ENCODE measurements at regions of chr1 and their contacts with region 1.

Region 1: GRCh38 chr1:201970334-201971159 is 11.9 kb upstream of the RNPEP start:
- DNase-seq: no peak

Region 2: DNA sequence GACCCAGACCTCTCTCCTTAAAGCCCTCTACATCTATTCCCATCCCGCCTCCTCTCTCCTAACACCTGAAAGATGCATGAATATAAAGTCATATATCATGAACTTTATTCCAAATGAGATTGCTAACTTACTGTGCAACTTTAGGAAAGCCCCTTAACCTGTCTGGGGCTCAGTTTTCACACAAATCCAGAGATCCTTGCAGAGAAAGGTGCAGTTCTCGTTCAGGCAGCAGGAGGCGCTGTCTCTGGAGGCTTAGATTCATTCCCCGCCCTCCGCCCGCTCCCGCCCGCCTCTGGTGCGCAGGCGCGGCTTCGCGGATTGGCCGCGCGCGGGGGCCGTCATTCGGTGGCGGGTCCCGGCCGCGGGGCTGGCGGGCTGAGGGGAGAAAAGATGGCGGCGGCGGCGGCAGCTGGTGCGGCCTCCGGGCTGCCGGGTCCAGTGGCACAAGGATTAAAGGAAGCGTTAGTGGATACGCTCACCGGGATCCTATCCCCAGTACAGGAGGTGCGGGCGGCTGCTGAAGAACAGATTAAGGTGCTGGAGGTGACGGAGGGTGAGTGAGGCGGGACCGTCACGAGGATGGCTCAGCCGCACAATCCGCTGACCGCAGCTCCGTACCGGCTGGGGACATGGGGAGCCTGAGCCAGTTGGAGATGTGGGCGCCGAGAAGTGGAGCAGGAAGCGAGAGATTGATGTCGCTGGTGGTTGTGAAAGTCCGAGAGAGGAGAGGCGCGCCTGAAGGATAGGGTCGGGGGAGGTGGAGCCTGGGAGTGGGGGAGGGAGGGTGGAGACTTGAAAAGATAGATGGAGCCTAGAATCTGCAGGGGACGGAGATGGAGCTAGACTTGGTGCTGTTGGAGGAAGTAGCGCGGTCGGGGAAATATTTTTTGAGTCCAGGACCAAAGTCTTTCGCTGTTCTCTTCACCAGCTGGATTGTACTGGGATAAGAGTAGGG is 141.4 kb before region 1 on chr1 and contains the start of gene IPO9:
- intact Hi-C with region 1: loop called (anchors 5 kb)
- DNase-seq: peak; percentile 97
- total RNA-seq, gene IPO9: 24.7 TPM

Region 3: DNA sequence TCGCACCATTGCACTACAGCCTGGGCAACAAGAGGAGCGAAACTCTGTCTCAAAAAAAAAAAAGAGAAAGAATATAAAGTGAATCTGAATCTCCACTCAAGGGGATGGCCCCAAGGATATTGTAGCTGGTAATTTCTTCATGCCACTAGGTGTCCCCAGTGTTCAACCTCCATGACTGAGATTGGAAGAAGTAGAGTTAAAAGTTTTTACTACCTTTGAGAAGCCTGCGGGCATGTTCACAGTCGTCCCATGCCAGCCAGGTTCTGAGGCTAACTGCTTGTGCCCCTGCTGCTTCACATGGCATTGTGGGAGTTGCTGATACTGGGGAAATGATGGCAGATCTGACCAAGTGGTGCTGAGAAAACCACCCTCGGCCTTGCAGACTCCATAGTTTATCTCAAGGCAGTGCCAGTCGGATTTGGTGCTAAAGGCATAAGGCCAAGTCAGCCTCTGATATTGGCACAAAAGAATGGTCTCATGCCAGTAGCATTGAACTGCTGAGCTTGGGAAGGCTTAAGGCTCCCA is 92.6 kb before region 1 on chr1:
- intact Hi-C with region 1: loop called (anchors 1 kb)
- DNase-seq: no peak

Region 4: GRCh38 chr1:201925981-201926645 is 44.4 kb before region 1 on chr1:
- intact Hi-C with region 1: no loop called
- DNase-seq: no peak

Measured in cardiac septum (tissue), 1 donor.